PC-3 (cell line): ENCODE measurements at regions of chr5 and their contacts with region 1.

Region 1: GRCh38 chr5:132064738-132065331 is 4.4 kb downstream of the IL3 start:
- DNase-seq: peak; percentile 84
- ATAC-seq: peak; percentile 81
- H3K4me3 ChIP-seq: no peak overlapping the region
- H3K27ac ChIP-seq: no peak overlapping the region
- H3K4me1 ChIP-seq: peaks cover 9% of the 10 kb centered on the region
- H3K27me3 ChIP-seq: no peaks in the 10 kb centered on the region
- CTCF ChIP-seq: peak; percentile 83

Region 2: GRCh38 chr5:131423056-131423455 is 641.8 kb before region 1 on chr5:
- CTCF ChIA-PET with region 1: no interaction called
- POLR2A ChIA-PET with region 1: no interaction called
- intact Hi-C with region 1: loop called (anchors 5 kb)
- DNase-seq: peak; percentile 31
- ATAC-seq: peak; percentile 43; the same call in 1 of the 2 replicates
- H3K4me3 ChIP-seq: no peak overlapping the region
- H3K27ac ChIP-seq: no peak overlapping the region
- H3K4me1 ChIP-seq: no peaks in the 10 kb centered on the region
- H3K27me3 ChIP-seq: no peaks in the 10 kb centered on the region
- CTCF ChIP-seq: peak; percentile 60

Region 3: DNA sequence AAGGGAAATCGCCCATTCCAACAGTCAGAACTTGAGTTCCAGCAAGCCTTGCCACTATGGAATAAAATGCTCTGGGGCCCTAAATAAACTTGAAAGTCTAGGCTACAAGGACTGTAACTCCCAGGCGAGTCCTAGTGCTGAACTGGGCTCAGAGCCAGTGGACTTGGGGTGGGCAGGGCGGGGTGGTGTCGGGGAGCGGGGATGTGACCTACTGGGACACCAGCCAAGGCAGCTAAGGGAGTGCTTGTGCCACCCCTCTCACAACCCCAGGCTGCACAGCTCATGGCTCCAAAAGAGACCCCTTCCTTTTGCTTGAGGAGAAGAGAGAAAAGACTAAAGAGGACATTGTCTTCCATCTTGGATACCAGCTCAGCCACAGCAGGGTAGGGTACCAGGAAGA is 180.9 kb before region 1 on chr5:
- CTCF ChIA-PET with region 1: no interaction called
- POLR2A ChIA-PET with region 1: no interaction called
- intact Hi-C with region 1: no loop called
- DNase-seq: no peak
- ATAC-seq: no peak
- H3K4me3 ChIP-seq: no peak overlapping the region
- H3K27ac ChIP-seq: no peak overlapping the region
- H3K4me1 ChIP-seq: no peaks in the 10 kb centered on the region
- H3K27me3 ChIP-seq: no peaks in the 10 kb centered on the region
- CTCF ChIP-seq: no peak

Region 4: DNA sequence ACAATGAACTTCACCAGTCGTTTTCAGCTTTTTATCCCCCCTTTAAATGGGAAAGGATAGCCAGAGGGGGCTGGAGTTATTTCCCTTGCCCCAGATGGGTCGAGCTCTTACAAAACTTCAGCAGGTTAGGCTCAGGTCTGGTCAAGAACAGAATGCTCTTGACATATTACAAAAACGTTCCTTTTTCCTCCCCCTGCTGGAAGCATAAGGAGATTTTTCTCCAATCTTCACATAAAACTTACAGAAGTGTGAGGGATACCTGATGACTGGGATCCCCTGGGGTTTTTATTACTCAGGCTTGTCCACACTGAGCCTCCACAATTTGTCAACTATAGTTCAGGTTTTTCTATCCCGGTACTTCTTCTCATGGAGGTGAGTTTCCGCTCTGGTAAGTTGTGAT is 69.5 kb after region 1 on chr5:
- CTCF ChIA-PET with region 1: no interaction called
- POLR2A ChIA-PET with region 1: no interaction called
- intact Hi-C with region 1: loop called (anchors 1 kb)
- DNase-seq: peak; percentile 59
- ATAC-seq: peak; percentile 58
- H3K4me3 ChIP-seq: no peak overlapping the region
- H3K27ac ChIP-seq: no peak overlapping the region
- H3K4me1 ChIP-seq: no peaks in the 10 kb centered on the region; the same call in 1 of the 2 replicates
- H3K27me3 ChIP-seq: no peaks in the 10 kb centered on the region
- CTCF ChIP-seq: peak; percentile 60

Region 5: GRCh38 chr5:132180134-132180745 is 115.4 kb after region 1 on chr5:
- CTCF ChIA-PET with region 1: no interaction called
- POLR2A ChIA-PET with region 1: no interaction called
- intact Hi-C with region 1: loop called (anchors 1 kb)
- DNase-seq: peak; percentile 69
- ATAC-seq: peak; percentile 48
- H3K4me3 ChIP-seq: no peak overlapping the region
- H3K27ac ChIP-seq: no peak overlapping the region
- H3K4me1 ChIP-seq: 0 out of 2 replicates have a peak, but pooled peaks cover 4% of the 10 kb centered on the region
- H3K27me3 ChIP-seq: no peaks in the 10 kb centered on the region
- CTCF ChIP-seq: peak; percentile 78

Region 6: GRCh38 chr5:132466433-132467286 is 401.8 kb after region 1 on chr5:
- CTCF ChIA-PET with region 1: no interaction called
- POLR2A ChIA-PET with region 1: no interaction called
- intact Hi-C with region 1: no loop called
- DNase-seq: no peak
- ATAC-seq: no peak
- H3K4me3 ChIP-seq: no peak overlapping the region
- H3K27ac ChIP-seq: no peak overlapping the region
- H3K4me1 ChIP-seq: no peaks in the 10 kb centered on the region; the same call in 1 of the 2 replicates
- H3K27me3 ChIP-seq: no peaks in the 10 kb centered on the region
- CTCF ChIP-seq: no peak